ENCODE measurements at regions of chr5 and their contacts with region 1.

Region 1: GRCh38 chr5:188488-189481 is 2.5 kb upstream of the LRRC14B start:
- DNase-seq: peak; percentile 93

Region 2: GRCh38 chr5:206406-206805 is 17.6 kb after region 1 on chr5:
- intact Hi-C with region 1: loop called (anchors 1 kb)
- DNase-seq: no peak

Region 3: DNA sequence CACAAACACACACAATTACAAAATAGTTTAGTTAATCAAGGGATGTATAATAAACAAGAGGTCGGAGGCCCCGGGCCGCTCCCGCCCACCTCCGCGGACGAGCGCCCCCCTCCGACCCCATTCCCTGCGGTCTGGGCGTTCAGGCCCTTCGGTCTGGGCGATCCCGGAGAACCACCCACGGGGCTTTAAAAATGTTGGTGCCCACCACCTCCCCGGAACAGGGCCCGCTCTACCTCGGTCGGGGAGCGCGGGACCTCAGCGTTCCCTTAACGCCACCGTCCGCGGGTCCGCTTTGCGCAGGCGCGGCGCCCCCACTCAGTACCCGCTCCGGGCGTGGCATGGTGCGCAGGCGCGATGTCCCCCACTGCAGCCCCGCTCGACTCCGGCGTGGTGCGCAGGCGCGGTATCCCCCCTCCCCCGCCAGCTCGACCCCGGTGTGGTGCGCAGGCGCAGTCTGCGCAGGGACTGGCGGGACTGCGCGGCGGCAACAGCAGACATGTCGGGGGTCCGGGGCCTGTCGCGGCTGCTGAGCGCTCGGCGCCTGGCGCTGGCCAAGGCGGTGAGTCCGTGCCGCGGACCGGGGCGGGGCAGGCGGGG is 29.2 kb after region 1 on chr5 and contains the starts of genes CCDC127 and SDHA:
- intact Hi-C with region 1: loop called (anchors 2 kb)
- DNase-seq: peak; percentile 97
- total RNA-seq, gene CCDC127: 9.6 TPM
- total RNA-seq, gene SDHA: 580 TPM